Activated CD4-positive, alpha-beta memory T cell treated with anti-CD3 and anti-CD28 coated beads for 36 hours (primary cell): ENCODE measurements at regions of chr19 and their contacts with region 1.

Region 1: GRCh38 chr19:38831142-38831605 is 420 bp downstream of the ECH1 start:
- DNase-seq: peak; percentile 65
- H3K4me3 Mint-ChIP-seq: peak overlapping the region; percentile 79
- H3K27ac Mint-ChIP-seq: peak overlapping the region; percentile 88
- H3K4me1 Mint-ChIP-seq: peaks cover 21% of the 10 kb centered on the region
- H3K27me3 Mint-ChIP-seq: no peaks in the 10 kb centered on the region

Region 2: DNA sequence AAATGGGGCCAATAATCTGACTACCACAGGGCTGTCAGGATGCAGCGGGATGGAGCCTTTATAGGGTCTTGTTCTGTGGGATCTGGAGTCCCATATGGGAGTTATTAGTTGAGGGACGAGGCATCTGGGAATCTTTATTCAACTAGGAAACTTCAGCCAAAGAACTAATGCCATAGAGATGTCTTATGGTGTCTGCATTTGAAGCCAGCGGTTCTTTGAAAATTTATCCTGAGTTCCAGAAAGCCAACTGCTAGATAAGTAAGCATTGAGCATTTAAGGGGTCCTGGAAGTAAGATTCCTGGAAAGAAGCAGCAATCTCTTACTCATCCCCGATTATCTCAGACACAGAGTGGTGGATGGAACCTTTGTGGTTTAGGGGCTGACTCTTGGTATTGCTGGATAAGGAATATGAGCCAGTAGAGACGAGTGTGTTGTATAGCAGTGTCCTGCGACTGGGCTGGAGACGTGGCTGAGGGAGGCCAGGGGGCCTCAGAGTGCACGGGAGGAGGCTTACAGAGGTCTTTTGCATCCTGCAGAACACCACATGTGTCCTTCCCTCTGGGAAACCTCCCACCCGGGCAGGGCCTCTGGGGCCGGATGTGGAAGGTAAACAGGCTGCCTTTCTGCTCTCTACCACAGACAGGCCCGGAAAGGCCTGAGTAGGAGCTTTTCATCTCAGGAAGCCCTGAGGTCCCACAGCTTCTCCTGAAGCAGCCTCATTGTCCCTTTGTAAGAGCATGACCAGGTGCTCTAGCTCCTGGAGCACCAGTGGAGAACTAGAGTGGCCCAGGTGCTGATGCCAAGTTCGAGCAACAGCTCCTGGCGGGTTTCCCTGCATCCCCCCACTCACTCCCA is 154.9 kb before region 1 on chr19:
- CTCF ChIA-PET with region 1: no interaction called
- POLR2A ChIA-PET with region 1: no interaction called
- intact Hi-C with region 1: no loop called
- DNase-seq: peak; percentile 21
- H3K4me3 Mint-ChIP-seq: no peak overlapping the region
- H3K27ac Mint-ChIP-seq: no peak overlapping the region
- H3K4me1 Mint-ChIP-seq: peaks cover 72% of the 10 kb centered on the region
- H3K27me3 Mint-ChIP-seq: no peaks in the 10 kb centered on the region

Region 3: GRCh38 chr19:38736413-38737280 is 94.5 kb before region 1 on chr19:
- CTCF ChIA-PET with region 1: no interaction called
- POLR2A ChIA-PET with region 1: interaction called, 3 read pairs
- intact Hi-C with region 1: loop called (anchors 5 kb)
- DNase-seq: peak; percentile 82
- H3K4me3 Mint-ChIP-seq: peak overlapping the region; percentile 51
- H3K27ac Mint-ChIP-seq: no peak overlapping the region
- H3K4me1 Mint-ChIP-seq: peaks cover 38% of the 10 kb centered on the region
- H3K27me3 Mint-ChIP-seq: no peaks in the 10 kb centered on the region

Region 4: GRCh38 chr19:38769635-38770211 is 61.5 kb before region 1 on chr19:
- CTCF ChIA-PET with region 1: interaction called, 8 read pairs
- POLR2A ChIA-PET with region 1: interaction called, 5 read pairs
- intact Hi-C with region 1: loop called (anchors 5 kb)
- DNase-seq: peak; percentile 93
- H3K4me3 Mint-ChIP-seq: peak overlapping the region; percentile 60
- H3K27ac Mint-ChIP-seq: peak overlapping the region; percentile 42
- H3K4me1 Mint-ChIP-seq: peaks cover 6% of the 10 kb centered on the region
- H3K27me3 Mint-ChIP-seq: no peaks in the 10 kb centered on the region

Region 5: DNA sequence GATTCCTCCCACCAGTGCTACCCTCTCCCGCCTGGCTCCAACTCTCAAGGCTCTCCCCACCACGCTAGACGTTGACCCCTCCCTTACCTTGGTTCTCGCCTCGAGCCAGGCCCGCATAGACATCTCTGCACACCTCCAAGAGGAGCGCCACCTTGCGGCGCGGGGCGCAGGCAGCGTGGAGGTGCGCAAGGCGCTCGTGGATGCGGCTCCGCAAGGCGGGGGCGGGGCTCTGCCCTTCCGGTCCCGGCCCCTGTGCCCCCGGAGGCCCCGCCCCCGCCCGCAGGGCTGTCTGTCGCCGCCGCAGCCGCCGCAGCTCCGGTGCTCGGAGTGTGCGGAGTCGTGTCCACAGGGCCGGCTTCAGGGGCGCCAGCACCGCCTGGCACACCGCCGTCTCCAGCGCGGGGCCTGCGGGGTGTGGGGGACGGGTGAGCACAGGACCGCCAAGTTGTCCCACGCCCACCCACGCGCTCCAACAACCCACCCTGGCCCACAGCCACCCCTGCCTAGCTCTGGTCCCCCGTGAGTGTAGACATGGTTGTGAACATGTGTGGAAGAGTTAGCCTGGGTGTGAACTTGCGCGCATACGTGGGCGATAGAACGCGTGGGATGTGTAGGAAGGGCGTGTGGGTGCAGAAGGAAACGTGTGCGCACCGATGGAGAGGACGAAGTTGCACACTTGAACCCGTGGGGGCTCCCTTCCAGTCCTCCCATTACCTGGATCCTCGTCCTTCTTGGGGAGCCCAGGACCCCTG is 38.9 kb after region 1 on chr19:
- CTCF ChIA-PET with region 1: interaction called, 3 read pairs
- POLR2A ChIA-PET with region 1: interaction called, 5 read pairs
- intact Hi-C with region 1: loop called (anchors 5 kb)
- DNase-seq: peak; percentile 94
- H3K4me3 Mint-ChIP-seq: peak overlapping the region; percentile 76
- H3K27ac Mint-ChIP-seq: peak overlapping the region; percentile 79
- H3K4me1 Mint-ChIP-seq: peaks cover 40% of the 10 kb centered on the region
- H3K27me3 Mint-ChIP-seq: no peaks in the 10 kb centered on the region

Region 6: GRCh38 chr19:38899447-38900219 is 68.5 kb after region 1 on chr19 and contains the starts of genes NFKBIB and SIRT2:
- CTCF ChIA-PET with region 1: interaction called, 3 read pairs
- POLR2A ChIA-PET with region 1: interaction called, 3 read pairs
- intact Hi-C with region 1: loop called (anchors 2 kb)
- DNase-seq: peak; percentile 100
- H3K4me3 Mint-ChIP-seq: peak within 1 kb of the TSS; percentile 95
- H3K27ac Mint-ChIP-seq: peak within 1 kb of the TSS; percentile 87
- H3K4me1 Mint-ChIP-seq: peaks cover 33% of the 10 kb centered on the region
- H3K27me3 Mint-ChIP-seq: no peaks in the 10 kb centered on the region
- total RNA-seq, gene NFKBIB: 49.6 to 53.4 TPM
- total RNA-seq, gene SIRT2: 23.5 to 24.6 TPM